GM12878 (cell line): ENCODE measurements at regions of chr11 and their contacts with region 1.

Region 1: DNA sequence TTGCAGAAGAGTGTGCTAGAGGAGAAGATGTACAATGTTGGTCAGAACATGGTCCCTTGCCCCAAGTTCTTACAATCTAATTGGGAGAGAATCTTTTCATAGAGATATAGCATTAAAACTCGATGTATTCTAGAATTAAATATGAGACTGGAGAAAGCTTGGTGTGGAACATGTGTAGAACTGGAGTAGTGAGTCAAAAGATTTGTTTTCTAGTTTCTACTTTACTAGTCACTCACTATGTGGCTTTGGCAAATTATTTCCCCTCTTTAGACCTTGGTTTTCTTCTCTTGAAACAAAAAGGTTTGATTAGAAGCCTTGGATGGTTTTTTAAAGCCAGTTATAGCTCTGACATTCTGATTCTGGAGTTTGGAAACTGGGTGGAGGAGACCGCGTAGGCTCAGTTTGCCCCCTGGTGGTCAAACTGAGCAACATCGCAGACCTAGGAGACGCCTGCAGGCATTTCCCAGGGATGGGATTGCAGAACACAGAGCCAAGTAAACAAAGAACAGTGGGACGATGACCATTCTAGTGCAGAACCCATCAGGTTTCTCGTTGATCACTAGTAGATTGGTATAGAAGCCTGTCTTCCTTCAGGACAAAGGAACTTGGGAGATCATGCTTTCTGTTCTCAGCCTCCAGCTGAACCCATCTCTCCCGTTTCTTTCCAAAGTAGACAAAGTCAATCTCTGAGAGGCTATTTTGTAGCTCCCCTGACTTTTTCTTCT is 8.5 kb upstream of the CHRDL2 start:
- DNase-seq: no peak
- ATAC-seq: peak; percentile 93
- H3K4me3 ChIP-seq: no peak overlapping the region
- H3K27ac ChIP-seq: no peak overlapping the region
- H3K4me1 ChIP-seq: no peaks in the 10 kb centered on the region
- H3K27me3 ChIP-seq: peaks cover 0 to 2% of the 10 kb centered on the region in 2 experiments; a peak in 1 of 4 replicates
- CTCF ChIP-seq: peak; percentile 83 to 92 (median 89)
- EP300 ChIP-seq: no peak
- POLR2A ChIP-seq: no peak
- RAD21 ChIP-seq: peak; percentile 62

Region 2: DNA sequence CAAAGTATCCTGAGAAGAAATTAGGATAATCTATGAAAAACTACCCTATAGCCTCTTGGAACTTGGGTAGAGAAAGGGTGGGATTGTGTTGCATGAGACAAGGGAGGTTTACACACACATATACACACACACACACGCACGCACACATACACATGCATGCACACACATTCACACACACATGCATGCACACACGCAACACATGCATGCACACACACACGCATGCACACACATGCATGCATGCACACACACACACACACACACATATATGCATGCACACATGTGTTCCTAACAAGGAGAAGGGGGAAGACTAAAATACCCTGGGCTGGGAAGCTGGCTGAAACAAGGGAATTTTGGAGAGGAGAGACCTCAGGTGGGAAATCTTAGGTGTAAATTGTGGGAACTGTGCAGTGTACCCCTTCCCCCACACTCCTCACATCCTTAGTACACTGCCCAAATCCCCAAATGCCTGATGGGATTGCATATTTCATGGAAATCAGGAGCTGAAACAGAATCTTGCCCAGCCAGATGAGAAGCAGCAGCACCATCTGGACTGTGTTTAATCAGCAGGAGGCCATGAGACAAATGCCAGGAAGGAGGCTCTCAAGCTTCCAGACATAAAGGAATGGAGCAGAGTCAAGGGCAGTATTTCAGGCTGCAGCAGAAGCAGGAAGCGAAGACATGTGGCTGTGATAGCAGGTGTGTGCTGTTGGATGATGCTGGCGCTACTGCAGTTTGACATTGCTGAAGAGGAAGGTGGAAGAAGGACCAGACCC is 161.9 kb before region 1 on chr11:
- CTCF ChIA-PET with region 1: no interaction called
- POLR2A ChIA-PET with region 1: no interaction called
- RAD21 ChIA-PET with region 1: no interaction called
- SMC1A ChIA-PET with region 1: no interaction called
- in situ Hi-C with region 1: no loop called
- intact Hi-C with region 1: no loop called
- DNase-seq: no peak
- ATAC-seq: no peak
- H3K4me3 ChIP-seq: no peak overlapping the region
- H3K27ac ChIP-seq: no peak overlapping the region
- H3K4me1 ChIP-seq: peaks cover 6% of the 10 kb centered on the region; the same call in 1 of the 2 replicates
- H3K27me3 ChIP-seq: no peaks in the 10 kb centered on the region; a peak in 1 of 4 replicates
- CTCF ChIP-seq: no peak
- EP300 ChIP-seq: no peak
- POLR2A ChIP-seq: no peak
- RAD21 ChIP-seq: no peak

Region 3: DNA sequence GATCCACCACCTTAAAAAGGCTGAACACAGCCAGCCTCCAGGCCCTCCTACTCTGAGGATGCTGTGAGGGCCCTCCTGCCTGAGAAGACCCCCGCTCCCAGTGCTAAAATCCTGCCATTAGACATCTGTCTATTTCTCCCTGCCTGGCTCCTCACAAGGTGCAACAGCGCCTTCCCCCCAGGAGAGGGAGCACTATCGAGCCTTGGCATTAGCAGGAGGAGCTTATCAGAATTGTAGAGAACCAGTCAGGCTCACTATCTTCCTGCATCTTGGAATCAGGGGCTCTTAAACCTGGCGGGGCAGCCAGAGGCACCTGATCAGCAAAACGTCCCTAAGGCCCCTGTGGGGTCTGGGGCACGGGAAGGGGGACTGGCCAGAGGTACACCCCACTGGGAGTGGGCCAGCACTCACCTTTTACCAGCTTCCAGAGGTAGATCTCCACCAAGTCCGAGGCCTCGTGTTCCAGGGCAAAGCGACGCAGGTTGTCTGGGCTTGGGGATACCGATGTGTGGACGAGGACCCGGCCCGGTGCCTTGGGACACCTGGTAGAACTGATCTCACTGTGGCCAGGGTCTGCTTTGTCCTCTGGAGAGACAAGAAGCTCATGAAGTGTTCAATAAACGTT is 37.2 kb before region 1 on chr11:
- CTCF ChIA-PET with region 1: interaction called, 36 read pairs
- POLR2A ChIA-PET with region 1: no interaction called
- RAD21 ChIA-PET with region 1: interaction called, 10 read pairs
- SMC1A ChIA-PET with region 1: interaction called, 21 read pairs
- in situ Hi-C with region 1: no loop called
- intact Hi-C with region 1: loop called (anchors 5 kb)
- DNase-seq: no peak
- ATAC-seq: peak; percentile 92
- H3K4me3 ChIP-seq: no peak overlapping the region
- H3K27ac ChIP-seq: no peak overlapping the region
- H3K4me1 ChIP-seq: no peaks in the 10 kb centered on the region
- H3K27me3 ChIP-seq: no peaks in the 10 kb centered on the region; a peak in 1 of 4 replicates
- CTCF ChIP-seq: peak; percentile 82 to 94 (median 91)
- EP300 ChIP-seq: no peak
- POLR2A ChIP-seq: no peak
- RAD21 ChIP-seq: peak; percentile 69

Region 4: DNA sequence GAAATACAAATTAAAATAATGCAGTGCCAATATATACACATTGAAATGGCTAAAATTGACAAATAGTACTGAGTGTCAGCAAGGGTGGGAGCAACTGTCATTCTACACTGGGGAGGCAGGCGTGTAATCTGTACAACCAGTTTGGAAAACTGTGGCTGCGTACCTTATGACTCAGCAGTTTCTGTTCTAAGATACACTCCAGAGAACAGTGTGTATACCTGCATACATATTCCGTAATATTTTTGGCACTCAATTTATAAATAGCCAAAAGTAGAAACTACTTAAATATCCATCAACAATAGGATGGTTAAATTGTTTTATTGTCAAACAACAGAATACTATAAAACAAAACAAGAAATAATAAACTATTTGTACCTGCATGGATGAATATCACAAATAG is 66.6 kb after region 1 on chr11:
- CTCF ChIA-PET with region 1: interaction called, 15 read pairs
- POLR2A ChIA-PET with region 1: no interaction called
- RAD21 ChIA-PET with region 1: no interaction called
- SMC1A ChIA-PET with region 1: no interaction called
- in situ Hi-C with region 1: no loop called
- intact Hi-C with region 1: no loop called
- DNase-seq: no peak
- ATAC-seq: peak; percentile 87
- H3K4me3 ChIP-seq: no peak overlapping the region
- H3K27ac ChIP-seq: no peak overlapping the region
- H3K4me1 ChIP-seq: 0 out of 2 replicates have a peak, but pooled peaks cover 3% of the 10 kb centered on the region
- H3K27me3 ChIP-seq: no peaks in the 10 kb centered on the region
- CTCF ChIP-seq: no peak
- EP300 ChIP-seq: no peak
- POLR2A ChIP-seq: no peak
- RAD21 ChIP-seq: no peak